Activated B cell treated with CpG ODN at 0.5 μM for 24 hours (primary cell): ENCODE measurements at regions of chr10 and their contacts with region 1.

Region 1: DNA sequence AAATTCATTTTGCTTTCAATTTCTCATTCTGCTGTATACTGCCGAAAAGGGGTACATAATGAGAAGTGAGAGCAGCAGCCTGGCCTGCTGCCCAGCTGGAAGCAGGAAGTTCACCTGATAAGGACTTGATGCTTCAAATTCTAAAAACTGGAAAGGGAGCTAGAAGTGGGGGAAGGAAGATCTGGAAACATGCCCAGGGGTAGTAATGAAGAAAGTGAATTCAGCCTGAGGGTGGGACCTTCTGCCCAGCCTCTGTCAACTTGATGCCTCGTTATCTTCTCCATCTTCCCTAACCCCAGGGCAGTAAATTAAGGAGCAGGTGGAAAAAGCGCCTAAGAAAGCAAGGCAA is 69.4 kb downstream of the ARMH3 start:
- DNase-seq: no peak
- ATAC-seq: peak; percentile 81
- H3K4me3 Mint-ChIP-seq: peak overlapping the region; percentile 75
- H3K27ac Mint-ChIP-seq: peak overlapping the region; percentile 90
- H3K4me1 Mint-ChIP-seq: peaks cover 23% of the 10 kb centered on the region
- H3K27me3 Mint-ChIP-seq: no peaks in the 10 kb centered on the region
- CTCF ChIP-seq: no peak

Region 2: DNA sequence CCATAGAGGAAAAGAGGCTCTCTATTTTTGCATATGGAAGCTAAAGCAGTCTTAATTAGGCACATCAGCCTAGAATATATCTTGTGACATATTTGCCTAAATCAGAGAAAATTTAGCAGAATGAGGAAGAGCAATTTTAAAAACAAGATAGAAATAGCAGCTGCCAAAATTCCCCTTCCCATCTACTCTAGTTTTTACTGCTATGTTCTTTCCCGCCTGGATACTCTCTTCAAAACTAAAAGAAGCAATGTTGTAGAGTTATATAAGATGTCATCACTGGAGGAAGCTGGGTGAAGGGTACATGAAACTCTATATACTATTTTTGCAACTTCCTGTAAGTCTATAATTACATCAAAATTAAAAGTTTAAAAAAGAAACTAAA is 17.7 kb before region 1 on chr10:
- CTCF ChIA-PET with region 1: no interaction called
- POLR2A ChIA-PET with region 1: interaction called, 7 read pairs
- intact Hi-C with region 1: loop called (anchors 1 kb)
- DNase-seq: no peak
- ATAC-seq: peak; percentile 63
- H3K4me3 Mint-ChIP-seq: peak overlapping the region; percentile 70
- H3K27ac Mint-ChIP-seq: peak overlapping the region; percentile 95
- H3K4me1 Mint-ChIP-seq: peaks cover 97% of the 10 kb centered on the region
- H3K27me3 Mint-ChIP-seq: no peaks in the 10 kb centered on the region
- CTCF ChIP-seq: no peak

Region 3: DNA sequence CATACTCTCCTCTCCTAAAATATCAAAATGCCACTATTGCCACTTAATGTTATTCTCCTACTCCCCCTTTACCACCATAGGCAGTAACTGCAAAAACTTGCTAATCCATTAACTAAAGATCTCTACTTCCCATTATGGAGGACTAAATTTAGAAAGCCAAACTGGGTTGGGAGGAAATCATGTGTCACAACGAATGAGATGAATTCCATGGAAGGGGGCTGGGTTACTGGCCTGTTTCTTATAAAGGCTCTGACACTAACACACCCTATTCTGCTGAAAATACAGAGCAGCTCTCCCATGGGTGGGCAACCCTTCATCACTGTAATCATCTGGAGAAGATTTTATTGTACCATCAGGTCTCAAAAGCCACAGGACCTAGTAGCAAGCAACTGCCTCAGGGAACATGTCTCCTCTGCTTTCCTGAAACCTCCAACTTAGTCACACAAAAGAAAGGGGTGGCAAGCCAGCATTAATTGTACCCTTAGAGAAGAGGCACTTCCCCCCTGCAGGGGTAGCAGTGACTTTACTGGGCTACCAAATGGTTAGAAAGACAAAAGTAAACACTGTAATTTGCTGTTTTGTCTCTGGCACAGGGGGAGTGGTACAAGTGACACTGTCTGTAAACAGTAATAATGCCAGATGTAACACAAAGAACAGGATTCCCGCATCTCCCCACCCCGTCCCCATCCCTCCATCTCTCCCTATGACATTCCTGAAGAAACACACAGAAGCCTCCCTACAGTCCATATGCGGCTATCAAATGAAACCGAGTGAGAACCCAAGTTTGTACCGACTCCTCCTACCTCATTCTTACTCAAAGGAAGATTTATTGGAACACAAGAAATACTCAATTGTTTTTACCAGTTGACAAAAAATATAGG is 12.3 kb before region 1 on chr10:
- CTCF ChIA-PET with region 1: no interaction called
- POLR2A ChIA-PET with region 1: interaction called, 7 read pairs
- intact Hi-C with region 1: loop called (anchors 1 kb)
- DNase-seq: no peak
- ATAC-seq: no peak
- H3K4me3 Mint-ChIP-seq: peak overlapping the region; percentile 74
- H3K27ac Mint-ChIP-seq: peak overlapping the region; percentile 88
- H3K4me1 Mint-ChIP-seq: peaks cover 67% of the 10 kb centered on the region
- H3K27me3 Mint-ChIP-seq: no peaks in the 10 kb centered on the region
- CTCF ChIP-seq: no peak

Region 4: DNA sequence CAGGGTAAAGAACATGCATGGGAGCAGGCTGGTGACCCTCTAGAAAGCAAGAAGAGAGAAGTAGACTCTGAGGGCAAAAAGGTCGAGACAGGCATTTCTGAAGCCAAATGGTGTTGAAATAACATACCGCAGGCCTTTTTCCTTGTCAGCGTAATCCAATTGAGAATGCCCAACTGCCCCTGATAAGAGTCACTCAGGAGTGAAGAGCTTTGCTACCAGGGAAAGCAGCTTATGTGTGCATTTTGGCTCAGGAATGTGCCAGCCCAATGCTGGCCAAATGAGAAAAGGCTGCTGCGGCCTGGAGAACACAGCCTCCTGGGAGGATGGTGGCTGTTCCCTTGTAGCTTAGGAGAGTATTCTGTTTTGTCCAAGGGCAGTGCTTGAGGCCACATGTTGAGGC is 347.5 kb after region 1 on chr10:
- CTCF ChIA-PET with region 1: no interaction called
- POLR2A ChIA-PET with region 1: no interaction called
- intact Hi-C with region 1: no loop called
- DNase-seq: no peak
- ATAC-seq: no peak
- H3K4me3 Mint-ChIP-seq: no peak overlapping the region
- H3K27ac Mint-ChIP-seq: no peak overlapping the region
- H3K4me1 Mint-ChIP-seq: no peaks in the 10 kb centered on the region
- H3K27me3 Mint-ChIP-seq: no peaks in the 10 kb centered on the region
- CTCF ChIP-seq: no peak